Activated B cell treated with CpG ODN at 0.5 μM for 24 hours (primary cell): ENCODE measurements at regions of chr3 and their contacts with region 1.

Region 1: DNA sequence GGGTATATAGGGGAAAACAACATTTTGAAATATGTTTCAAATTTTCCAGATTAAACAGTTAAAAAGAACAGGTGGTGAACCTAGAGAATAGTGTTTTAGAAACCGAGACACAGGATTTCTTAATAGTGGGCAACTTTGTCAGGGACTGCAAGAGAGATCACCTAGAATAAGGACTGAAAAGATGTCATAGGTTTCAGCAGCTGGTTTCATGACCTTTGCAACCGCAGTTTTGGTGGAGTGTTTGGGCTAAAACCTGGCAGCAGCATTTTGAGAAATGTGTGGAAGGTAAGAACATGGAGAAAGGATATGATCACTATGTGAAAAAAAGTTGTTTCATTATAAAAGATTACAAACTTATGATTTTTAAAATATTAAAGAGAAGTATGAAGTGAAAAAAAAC is 34.9 kb downstream of the PRKCI start:
- DNase-seq: no peak
- ATAC-seq: no peak
- H3K4me3 Mint-ChIP-seq: no peak overlapping the region
- H3K27ac Mint-ChIP-seq: no peak overlapping the region
- H3K4me1 Mint-ChIP-seq: peaks cover 11% of the 10 kb centered on the region
- H3K27me3 Mint-ChIP-seq: no peaks in the 10 kb centered on the region
- CTCF ChIP-seq: no peak

Region 2: DNA sequence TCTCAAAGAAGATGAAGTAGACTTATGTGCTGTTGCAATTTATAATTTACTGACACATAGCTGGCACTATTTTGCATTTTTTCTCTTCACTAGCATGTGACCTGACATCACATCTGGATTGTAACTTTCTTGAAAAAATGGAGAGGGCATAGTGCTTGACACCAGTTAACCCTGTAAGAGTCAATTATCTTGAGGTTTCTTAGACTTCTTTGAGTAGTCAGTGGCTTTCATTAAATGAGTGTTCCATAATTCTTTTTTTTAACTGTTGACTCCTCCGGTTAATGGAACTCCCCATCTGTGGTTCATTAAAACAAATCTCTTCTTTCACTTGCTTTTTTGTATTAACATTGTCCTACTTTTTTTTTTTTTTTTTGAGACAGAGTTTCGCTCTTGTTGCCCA is 51.8 kb before region 1 on chr3:
- CTCF ChIA-PET with region 1: no interaction called
- POLR2A ChIA-PET with region 1: no interaction called
- intact Hi-C with region 1: no loop called
- DNase-seq: no peak
- ATAC-seq: no peak
- H3K4me3 Mint-ChIP-seq: no peak overlapping the region
- H3K27ac Mint-ChIP-seq: no peak overlapping the region
- H3K4me1 Mint-ChIP-seq: no peaks in the 10 kb centered on the region
- H3K27me3 Mint-ChIP-seq: peaks cover 24% of the 10 kb centered on the region
- CTCF ChIP-seq: no peak

Region 3: GRCh38 chr3:170221924-170222646 is 35.1 kb before region 1 on chr3 and contains the start of gene PRKCI:
- CTCF ChIA-PET with region 1: interaction called, 4 read pairs
- POLR2A ChIA-PET with region 1: no interaction called
- intact Hi-C with region 1: loop called (anchors 5 kb)
- DNase-seq: peak; percentile 64
- ATAC-seq: peak; percentile 94
- H3K4me3 Mint-ChIP-seq: peak within 1 kb of the TSS; percentile 95
- H3K27ac Mint-ChIP-seq: peak within 1 kb of the TSS; percentile 73
- H3K4me1 Mint-ChIP-seq: peaks cover 14% of the 10 kb centered on the region
- H3K27me3 Mint-ChIP-seq: no peaks in the 10 kb centered on the region
- CTCF ChIP-seq: no peak
- total RNA-seq, gene PRKCI: 6.6 and 6.9 TPM in 2 replicates

Region 4: DNA sequence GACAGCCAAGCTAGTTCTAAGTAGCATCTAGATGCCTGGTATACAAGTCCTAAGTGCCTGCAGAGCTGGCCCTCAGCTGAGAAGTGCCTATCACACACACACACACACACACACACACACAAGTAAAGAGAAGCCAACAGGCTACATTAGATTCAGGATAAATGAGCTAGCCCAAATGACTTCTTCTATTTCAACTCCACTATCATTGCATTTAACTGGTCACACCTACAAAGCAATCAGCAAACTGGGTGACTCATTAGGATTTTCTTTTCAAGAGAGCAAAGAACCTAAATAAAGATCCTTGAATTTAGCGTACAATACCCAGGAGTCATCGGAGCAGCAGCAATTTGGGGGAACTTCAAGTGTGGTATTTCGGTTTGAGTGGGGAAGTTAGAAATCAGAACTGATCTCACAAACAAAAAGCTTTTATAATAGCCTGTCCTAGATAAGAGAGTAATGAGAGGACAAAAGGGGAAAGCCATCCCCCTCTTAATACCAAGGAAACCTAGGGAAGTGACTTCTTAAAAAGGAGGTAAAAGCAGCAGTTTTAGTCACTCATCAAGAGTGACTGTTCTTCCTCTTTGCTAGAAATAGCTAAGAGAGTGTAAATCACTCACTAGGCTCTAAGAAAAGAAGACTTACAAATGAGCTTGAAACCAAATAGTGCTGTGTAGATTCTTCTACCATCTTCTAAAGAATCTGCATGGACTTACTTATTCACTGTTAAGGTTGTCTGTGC is 1090.3 kb after region 1 on chr3:
- CTCF ChIA-PET with region 1: no interaction called
- POLR2A ChIA-PET with region 1: no interaction called
- intact Hi-C with region 1: no loop called
- DNase-seq: no peak
- ATAC-seq: no peak
- H3K4me3 Mint-ChIP-seq: no peak overlapping the region
- H3K27ac Mint-ChIP-seq: no peak overlapping the region
- H3K4me1 Mint-ChIP-seq: peaks cover 8% of the 10 kb centered on the region
- H3K27me3 Mint-ChIP-seq: no peaks in the 10 kb centered on the region
- CTCF ChIP-seq: no peak